Activated CD4-positive, alpha-beta T cell treated with anti-CD3 and anti-CD28 coated beads, Interleukin-2, amount 10 ng/mL, durations not matched to agents 24 days and 14 days (primary cell): ENCODE measurements at regions of chr2 and their contacts with region 1.

Region 1: DNA sequence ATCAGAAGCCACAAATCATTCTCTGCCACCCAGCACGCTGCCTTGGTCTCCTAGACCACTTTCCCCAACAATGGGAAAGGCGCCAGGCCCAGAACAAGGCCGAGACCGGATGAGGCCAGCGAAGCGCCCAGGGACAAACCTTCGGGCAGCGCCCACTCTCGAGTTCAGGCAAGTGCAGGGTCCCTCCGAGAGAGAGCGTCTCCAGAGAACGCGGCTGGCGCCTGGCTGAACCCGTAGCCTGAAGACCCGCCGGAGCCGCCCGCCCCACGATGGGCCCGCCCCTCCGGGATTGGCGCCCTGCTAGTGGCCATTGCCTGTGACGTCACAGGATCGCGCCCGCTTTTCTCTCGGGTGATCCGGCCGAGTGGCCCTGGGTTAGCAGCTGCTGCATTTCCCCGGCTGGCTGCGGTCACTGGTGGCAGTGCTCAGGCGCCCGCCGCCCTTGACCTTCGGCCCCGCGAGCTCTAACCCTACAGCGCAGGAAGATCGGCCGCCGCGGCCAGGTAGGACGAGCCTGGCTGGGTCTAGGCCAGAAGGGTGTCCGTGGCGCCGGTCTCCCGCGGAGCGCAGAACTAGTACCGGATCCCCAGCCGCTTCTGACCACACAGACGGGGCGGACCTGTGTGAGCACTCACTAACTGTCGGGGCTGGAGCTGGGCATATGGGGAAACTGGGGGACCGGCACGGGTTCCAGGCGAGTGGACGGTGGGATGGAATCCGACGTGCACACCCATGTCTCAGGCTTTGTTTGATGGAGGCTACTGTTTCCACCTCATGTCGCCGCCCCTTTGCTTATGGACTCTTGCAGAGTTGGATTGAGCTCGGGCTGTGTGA is at the start of gene FAHD2A:
- DNase-seq: peak; percentile 99
- H3K4me3 Mint-ChIP-seq: peak within 1 kb of the TSS; percentile 96
- H3K27ac Mint-ChIP-seq: peak within 1 kb of the TSS; percentile 97
- H3K4me1 Mint-ChIP-seq: peaks cover 20% of the 10 kb centered on the region
- H3K27me3 Mint-ChIP-seq: no peaks in the 10 kb centered on the region
- total RNA-seq, gene FAHD2A: 35.8 and 36.0 TPM in 2 replicates

Region 2: DNA sequence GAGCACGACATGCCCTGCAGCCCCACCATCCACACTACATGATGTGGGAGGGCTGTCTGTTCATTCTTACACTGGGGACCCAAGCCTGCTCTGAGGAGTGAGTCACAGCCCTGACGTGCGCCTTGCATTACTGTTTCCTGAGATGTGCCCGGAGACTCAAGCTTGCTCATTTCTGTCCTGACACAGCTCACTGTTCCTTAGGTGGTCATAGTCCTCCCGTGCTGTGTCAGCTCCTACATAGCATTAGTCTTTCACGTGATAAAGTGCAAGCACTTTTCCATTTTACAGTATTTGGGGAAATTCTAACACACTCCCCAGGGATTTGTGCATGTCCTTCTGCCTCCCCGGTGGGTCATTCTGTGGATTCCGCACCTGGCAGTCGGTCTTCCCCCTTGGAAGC is 128.1 kb after region 1 on chr2:
- intact Hi-C with region 1: loop called (anchors 2 kb)
- DNase-seq: peak; percentile 64
- H3K4me3 Mint-ChIP-seq: peak overlapping the region; percentile 53
- H3K27ac Mint-ChIP-seq: peak overlapping the region; percentile 89
- H3K4me1 Mint-ChIP-seq: peaks cover 37% of the 10 kb centered on the region
- H3K27me3 Mint-ChIP-seq: no peaks in the 10 kb centered on the region

Region 3: DNA sequence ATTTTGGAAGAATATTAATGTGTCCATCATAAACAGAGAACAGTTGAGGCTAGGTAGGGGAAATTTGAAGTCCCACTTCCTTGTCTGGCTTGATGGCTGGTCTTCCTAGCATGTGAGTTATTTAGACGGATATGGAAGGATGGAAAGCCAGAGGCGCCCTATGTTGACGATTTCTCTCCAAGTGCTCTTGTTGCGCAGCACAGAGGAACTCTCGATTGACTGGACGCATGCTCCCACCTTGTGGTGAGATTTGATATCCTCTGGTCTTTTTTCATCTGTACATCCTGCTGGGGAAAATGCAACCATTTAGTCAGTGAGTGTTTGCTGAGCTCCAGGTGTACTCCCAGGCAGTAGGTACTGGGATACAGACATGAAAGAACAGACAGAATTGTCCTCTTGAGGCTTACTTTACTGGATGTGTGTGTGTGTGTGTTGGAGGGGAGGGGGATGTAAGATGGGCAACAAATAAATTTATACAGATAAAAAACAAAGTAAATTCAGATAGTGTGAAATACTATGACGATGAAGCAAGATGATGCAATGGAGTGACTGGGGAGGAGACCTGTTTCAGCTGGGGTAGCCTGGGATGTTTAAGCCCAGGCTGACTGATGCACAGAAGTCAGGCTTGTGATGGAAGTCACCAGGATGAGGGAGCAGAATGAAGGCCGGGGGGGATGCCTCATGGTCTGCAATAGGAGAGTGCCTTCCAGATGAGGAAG is 326.4 kb after region 1 on chr2:
- intact Hi-C with region 1: loop called (anchors 5 kb)
- DNase-seq: peak; percentile 82
- H3K4me3 Mint-ChIP-seq: no peak overlapping the region
- H3K27ac Mint-ChIP-seq: no peak overlapping the region
- H3K4me1 Mint-ChIP-seq: peaks cover 1% of the 10 kb centered on the region
- H3K27me3 Mint-ChIP-seq: peaks cover 10% of the 10 kb centered on the region